ENCODE measurements at regions of chr7 and their contacts with region 1.

Region 1: DNA sequence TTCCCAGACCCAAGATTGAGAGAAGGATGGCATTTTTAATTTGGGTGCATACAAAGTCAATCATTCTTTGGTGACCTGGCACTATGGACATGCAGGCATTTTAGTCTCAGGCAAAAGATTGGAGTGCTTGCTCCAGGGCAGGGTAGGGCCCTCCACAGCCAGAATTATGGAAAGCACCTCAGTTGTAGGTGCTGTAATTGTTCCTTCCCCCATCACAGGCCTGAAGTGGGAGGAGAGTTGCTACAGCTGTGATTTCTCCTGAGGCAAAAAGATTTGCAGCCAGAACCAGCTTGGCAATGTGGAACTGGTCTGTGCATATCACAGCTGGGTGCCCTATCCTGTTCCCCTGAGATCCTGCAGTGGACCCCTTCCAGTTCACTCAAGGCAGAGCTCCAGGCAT is 563.4 kb downstream of the DNAJB9 start:
- DNase-seq: no peak
- ATAC-seq: no peak
- H3K4me3 ChIP-seq: no peak overlapping the region
- H3K27ac ChIP-seq: no peak overlapping the region
- H3K4me1 ChIP-seq: no peaks in the 10 kb centered on the region
- H3K27me3 ChIP-seq: no peaks in the 10 kb centered on the region
- CTCF ChIP-seq: no peak
- EP300 ChIP-seq: no peak
- POLR2A ChIP-seq: no peak
- RAD21 ChIP-seq: no peak

Region 2: DNA sequence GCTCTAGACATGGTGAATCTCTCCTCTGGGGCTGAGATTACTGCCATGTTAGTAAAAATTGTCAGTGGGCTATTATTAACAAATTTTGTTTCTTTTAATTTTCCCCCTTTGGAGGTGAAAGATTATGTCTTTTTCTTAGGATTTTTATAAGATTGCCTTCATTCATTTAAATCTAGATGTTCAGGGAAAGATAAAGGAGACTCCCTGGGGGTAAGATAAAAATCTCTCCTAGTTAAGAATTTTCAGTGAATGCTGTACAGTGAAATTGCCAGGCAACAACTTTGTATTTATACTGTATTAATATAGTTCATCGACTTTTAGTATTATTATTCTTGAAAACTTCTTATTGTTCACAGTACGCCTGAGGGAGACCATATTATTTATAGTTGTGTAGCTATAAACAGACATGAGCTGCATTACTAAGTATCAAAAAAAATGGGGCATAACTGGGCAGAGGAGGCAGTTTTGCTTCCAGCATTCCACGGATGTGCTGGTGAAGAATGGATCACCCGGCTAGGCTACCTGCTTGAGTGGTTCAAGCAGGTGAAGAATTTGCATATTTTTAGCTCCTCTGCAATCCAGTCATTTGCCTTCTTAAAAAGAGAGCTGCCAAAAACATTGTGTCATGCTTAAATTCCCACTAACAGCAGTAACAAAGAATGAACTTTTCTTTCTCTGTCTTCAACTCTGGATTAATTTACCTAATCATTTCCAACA is 11.3 kb before region 1 on chr7:
- CTCF ChIA-PET with region 1: interaction called, 3 read pairs
- POLR2A ChIA-PET with region 1: no interaction called
- RAD21 ChIA-PET with region 1: no interaction called
- SMC1A ChIA-PET with region 1: no interaction called
- in situ Hi-C with region 1: no loop called
- intact Hi-C with region 1: loop called (anchors 2 kb)
- DNase-seq: no peak
- ATAC-seq: no peak
- H3K4me3 ChIP-seq: no peak overlapping the region
- H3K27ac ChIP-seq: no peak overlapping the region
- H3K4me1 ChIP-seq: no peaks in the 10 kb centered on the region
- H3K27me3 ChIP-seq: no peaks in the 10 kb centered on the region
- CTCF ChIP-seq: no peak
- EP300 ChIP-seq: no peak
- POLR2A ChIP-seq: no peak
- RAD21 ChIP-seq: no peak